Prostate gland (tissue), 2 donors: ENCODE measurements at regions of chr17 and their contacts with region 1.

Region 1: DNA sequence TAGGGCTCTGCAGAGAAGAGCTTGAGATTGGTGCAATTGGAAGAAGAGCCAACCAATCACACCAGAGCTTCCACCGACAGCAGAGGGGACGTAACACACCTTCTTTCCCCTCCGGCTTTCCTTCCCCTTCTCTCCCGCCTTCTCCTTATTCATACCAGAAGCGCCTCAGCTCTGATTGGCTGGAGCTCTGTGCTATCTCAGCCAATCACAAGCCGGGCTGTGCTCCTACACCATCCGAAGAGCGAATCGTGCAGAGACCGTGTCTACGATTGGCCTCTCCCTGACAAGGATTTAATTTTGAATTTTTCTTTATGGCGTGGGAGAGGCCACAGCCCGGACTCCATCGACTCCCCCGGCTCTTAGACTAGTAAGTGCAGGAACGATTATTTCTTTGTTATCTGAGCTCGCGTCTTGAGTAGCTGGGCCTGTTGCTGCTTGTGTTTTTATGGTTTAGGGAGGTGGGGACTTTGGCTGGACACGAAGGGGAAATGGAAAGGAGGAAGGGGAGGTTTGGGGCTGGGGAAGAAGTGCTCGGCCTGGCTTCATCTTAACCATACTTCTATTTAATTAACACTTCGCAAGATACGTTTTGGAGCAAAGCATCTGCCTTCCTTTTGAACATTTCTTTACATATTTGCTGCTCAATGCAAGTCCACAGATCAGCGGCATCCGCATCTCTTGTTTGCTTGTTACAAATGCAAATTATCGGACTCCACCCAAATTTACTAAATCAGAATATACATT is at the start of gene PRR11:
- DNase-seq: peak; percentile 99
- H3K4me3 ChIP-seq: peak within 1 kb of the TSS; percentile 54 to 71
- H3K27ac ChIP-seq: peak within 1 kb of the TSS; percentile 82 to 86
- H3K4me1 ChIP-seq: no peaks in the 10 kb centered on the region
- H3K27me3 ChIP-seq: no peaks in the 10 kb centered on the region
- CTCF ChIP-seq: no peak
- POLR2A ChIP-seq: no peak
- total RNA-seq, gene PRR11: 2.5 to 3.2 TPM

Region 2: GRCh38 chr17:59106463-59107305 is 48.9 kb before region 1 on chr17 and contains the start of gene TRIM37:
- intact Hi-C with region 1: loop called (anchors 5 kb)
- DNase-seq: peak; percentile 97
- H3K4me3 ChIP-seq: peak within 1 kb of the TSS; percentile 87 to 89
- H3K27ac ChIP-seq: peak within 1 kb of the TSS; percentile 91
- H3K4me1 ChIP-seq: peaks cover 2% of the 10 kb centered on the region
- H3K27me3 ChIP-seq: no peaks in the 10 kb centered on the region
- CTCF ChIP-seq: peak in 2 of 4 experiments; percentile 26 to 37
- POLR2A ChIP-seq: peak; percentile 77
- total RNA-seq, gene TRIM37: 22.6 to 55.5 TPM

Region 3: GRCh38 chr17:59230764-59231163 is 75.2 kb after region 1 on chr17:
- intact Hi-C with region 1: no loop called
- DNase-seq: no peak
- H3K4me3 ChIP-seq: no peak overlapping the region
- H3K27ac ChIP-seq: no peak overlapping the region
- H3K4me1 ChIP-seq: no peaks in the 10 kb centered on the region
- H3K27me3 ChIP-seq: no peaks in the 10 kb centered on the region
- CTCF ChIP-seq: no peak
- POLR2A ChIP-seq: no peak